Caco-2 (cell line): ENCODE measurements at regions of chr9 and their contacts with region 1.

Region 1: DNA sequence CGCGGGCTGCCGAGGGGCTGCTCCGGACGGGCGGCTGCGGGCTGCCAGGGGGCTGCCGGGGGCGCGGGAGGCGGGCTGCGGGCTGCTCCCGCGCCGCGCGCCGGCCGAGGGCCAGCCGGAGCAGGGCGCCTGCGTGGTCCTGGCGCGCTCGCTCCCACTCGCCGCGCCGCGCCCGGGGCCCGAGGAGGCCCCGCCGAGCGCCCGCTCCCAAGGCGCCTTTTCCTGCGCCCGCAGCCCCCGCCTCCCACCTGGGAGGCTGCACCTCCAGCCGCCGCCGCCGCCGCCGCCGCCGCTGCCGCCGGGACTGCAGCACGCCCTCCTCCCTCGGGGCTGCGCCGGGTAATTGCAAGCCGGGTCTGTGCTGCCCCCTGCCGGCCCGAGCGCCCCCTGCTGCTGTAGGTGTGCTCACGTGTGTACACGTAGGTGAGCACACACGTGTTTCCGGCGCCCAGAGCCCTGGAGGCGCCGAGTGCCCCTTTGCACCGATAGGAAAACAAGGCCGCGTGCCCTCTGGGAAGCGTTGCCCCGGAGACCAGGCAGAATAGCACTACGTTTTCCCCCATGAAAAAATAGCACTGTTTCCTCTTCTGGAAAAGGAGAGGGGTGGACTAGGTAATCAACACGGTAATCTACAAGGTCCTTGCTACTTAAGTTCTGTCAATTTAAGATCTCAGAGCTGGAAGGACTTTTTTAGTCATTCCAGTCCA is at the start of gene EPB41L4B:
- DNase-seq: peak; percentile 94 to 97
- H3K4me3 ChIP-seq: peak within 1 kb of the TSS; percentile 84
- H3K4me3 Mint-ChIP-seq: peak within 1 kb of the TSS; percentile 83
- H3K27ac Mint-ChIP-seq: peak within 1 kb of the TSS; percentile 58
- H3K4me1 ChIP-seq: peaks cover 20% of the 10 kb centered on the region
- H3K4me1 Mint-ChIP-seq: peaks cover 17% of the 10 kb centered on the region
- H3K27me3 ChIP-seq: no peaks in the 10 kb centered on the region
- H3K27me3 Mint-ChIP-seq: no peaks in the 10 kb centered on the region
- CTCF ChIP-seq: peak; percentile 95 to 96
- total RNA-seq, gene EPB41L4B: 14.7 and 16.3 TPM in 2 replicates

Region 2: DNA sequence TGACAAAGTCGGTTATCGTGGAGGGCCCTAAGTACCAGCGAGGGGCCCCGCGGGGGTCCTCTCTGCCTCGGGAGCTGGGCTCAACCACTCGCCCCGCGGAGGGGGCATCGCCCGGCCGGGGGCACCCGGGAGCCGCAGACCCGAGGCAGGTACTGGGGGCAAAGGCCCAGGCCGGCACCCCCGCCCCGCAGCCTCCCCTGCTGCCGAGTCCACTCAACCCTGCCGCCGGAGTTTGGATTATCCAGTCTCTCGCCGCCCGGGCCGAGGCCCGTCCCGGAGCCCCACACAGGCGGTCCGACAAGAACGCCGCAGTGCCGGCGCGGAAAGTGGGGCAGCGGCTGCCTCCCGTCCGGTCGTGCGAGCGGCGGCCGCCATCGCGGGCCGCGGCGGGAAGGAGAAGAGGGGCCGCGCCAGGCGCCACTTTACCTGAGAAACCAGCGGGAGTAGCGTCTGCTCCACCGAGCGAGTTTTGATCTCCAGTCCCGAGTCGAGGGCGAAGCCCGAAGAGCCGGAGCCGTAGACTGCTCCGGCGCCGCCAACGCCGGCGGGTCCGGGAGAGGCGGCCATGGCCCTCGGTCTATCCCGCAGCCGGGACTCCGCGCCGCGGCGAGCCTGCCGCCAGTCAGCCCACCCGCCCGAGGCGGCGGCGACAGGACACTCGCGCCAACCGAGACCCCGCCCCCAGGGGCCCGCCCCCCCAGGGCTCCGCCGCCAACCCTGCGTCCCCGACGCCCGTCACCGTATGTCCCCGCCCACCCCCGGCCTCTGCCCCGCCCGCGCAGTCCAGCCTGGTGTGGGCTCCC is 307.8 kb before region 1 on chr9 and contains the start of gene CTNNAL1:
- CTCF ChIA-PET with region 1: no interaction called
- POLR2A ChIA-PET with region 1: no interaction called
- intact Hi-C with region 1: loop called (anchors 2 kb)
- DNase-seq: peak; percentile 97
- H3K4me3 ChIP-seq: peak within 1 kb of the TSS; percentile 73
- H3K4me3 Mint-ChIP-seq: peak within 1 kb of the TSS; percentile 94
- H3K27ac Mint-ChIP-seq: peak within 1 kb of the TSS; percentile 77
- H3K4me1 ChIP-seq: peaks cover 48% of the 10 kb centered on the region
- H3K4me1 Mint-ChIP-seq: peaks cover 20% of the 10 kb centered on the region
- H3K27me3 ChIP-seq: no peaks in the 10 kb centered on the region
- H3K27me3 Mint-ChIP-seq: no peaks in the 10 kb centered on the region
- CTCF ChIP-seq: no peak
- total RNA-seq, gene CTNNAL1: 107 and 111 TPM in 2 replicates

Region 3: DNA sequence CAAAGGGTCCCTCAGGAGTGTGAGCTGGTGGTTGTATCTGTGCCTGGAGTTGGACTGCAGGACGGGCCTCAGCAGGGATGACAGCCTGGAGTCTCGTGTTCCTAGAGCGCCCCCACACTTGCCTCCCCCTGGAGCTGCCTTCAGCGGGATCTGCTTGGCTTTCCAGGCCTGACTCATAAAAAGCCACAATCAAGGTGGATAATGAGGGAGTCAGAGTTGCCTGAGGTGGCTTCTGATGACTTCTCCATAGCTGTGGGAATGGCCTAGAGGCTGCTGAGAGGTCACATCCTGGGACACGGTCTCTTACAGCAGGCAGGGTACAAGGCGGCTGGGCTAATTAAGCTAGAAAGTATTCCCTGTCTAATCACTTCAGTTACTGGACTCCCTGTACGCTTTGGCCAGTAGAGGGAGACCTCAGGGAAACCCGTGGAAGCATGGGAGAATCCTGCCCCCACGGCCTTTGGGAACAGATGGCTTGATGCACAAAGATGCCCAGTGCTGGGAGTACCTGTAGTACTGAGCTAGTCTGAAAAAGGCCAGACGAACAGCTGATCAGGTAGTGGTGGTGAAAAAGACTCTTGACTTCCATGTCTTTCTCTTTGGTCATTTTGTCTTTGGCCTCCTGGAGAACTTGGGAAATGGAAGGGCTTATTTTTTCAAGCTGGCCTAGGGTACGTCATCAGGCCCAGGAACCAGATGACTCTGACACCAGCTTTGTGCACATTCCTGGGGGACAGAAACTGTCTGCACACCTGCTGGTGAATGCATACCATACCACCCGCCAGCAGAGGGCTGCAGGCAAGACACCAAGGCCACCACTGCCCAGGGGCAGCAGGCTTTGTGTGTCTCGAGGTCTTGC is 137.7 kb before region 1 on chr9:
- CTCF ChIA-PET with region 1: no interaction called
- POLR2A ChIA-PET with region 1: no interaction called
- intact Hi-C with region 1: loop called (anchors 1 kb)
- DNase-seq: peak; percentile 71 to 76
- H3K4me3 ChIP-seq: no peak overlapping the region
- H3K4me3 Mint-ChIP-seq: no peak overlapping the region
- H3K27ac Mint-ChIP-seq: no peak overlapping the region
- H3K4me1 ChIP-seq: no peaks in the 10 kb centered on the region
- H3K4me1 Mint-ChIP-seq: no peaks in the 10 kb centered on the region
- H3K27me3 ChIP-seq: no peaks in the 10 kb centered on the region
- H3K27me3 Mint-ChIP-seq: no peaks in the 10 kb centered on the region
- CTCF ChIP-seq: peak; percentile 28 to 68

Region 4: DNA sequence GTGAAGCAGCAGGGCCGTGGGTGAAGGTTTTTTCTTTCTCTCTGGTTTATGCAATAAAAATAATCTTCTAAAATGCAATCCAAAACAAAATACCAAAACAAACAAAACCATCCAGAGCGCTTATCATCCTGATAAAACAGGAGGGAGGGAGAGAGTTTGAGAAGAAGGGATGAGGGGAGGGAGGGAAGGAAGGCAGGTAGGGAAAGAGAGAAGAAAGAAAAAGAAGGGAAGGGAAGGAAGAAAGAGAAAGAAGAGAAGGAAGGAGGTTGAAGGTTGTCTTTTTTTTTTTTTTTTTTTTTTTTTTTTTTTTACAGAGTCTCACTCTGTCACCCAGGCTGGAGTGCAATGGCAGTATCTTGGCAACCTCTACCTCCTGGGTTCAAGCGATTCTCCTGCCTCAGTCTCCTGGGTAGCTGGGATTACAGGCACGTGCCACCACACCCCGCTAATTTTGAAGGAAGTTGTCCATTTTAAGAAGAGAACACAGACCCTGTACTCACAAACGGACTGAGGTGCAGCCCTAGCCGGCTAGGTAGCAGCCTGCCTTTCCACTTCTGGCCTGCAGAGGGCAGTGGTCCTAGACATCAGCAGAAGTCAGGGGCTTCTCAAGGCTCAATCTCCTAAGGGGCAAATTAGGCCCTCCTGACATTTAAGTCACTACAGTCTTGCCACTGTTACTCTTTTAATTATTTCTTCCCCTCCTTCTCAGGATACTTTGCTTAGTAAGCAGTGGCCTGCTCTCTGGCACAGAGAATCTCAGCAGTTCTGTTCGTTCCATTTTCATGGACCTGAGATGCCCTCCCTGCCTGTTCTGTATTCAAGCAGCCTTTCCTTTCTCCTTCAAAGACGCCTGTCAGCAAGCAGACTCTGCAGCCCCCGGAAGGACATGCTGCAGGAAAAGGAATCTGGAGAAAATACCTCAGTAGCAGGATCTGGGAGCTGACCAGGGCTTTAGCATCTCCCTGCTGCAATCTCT is 76.5 kb before region 1 on chr9:
- CTCF ChIA-PET with region 1: no interaction called
- POLR2A ChIA-PET with region 1: interaction called, 4 read pairs
- intact Hi-C with region 1: loop called (anchors 1 kb)
- DNase-seq: peak; percentile 78 to 82
- H3K4me3 ChIP-seq: no peak overlapping the region
- H3K4me3 Mint-ChIP-seq: no peak overlapping the region
- H3K27ac Mint-ChIP-seq: no peak overlapping the region
- H3K4me1 ChIP-seq: no peaks in the 10 kb centered on the region
- H3K4me1 Mint-ChIP-seq: no peaks in the 10 kb centered on the region
- H3K27me3 ChIP-seq: no peaks in the 10 kb centered on the region
- H3K27me3 Mint-ChIP-seq: no peaks in the 10 kb centered on the region
- CTCF ChIP-seq: peak; percentile 95 to 96

Region 5: GRCh38 chr9:109344866-109345265 is 24.0 kb after region 1 on chr9:
- CTCF ChIA-PET with region 1: interaction called, 5 read pairs
- POLR2A ChIA-PET with region 1: no interaction called
- intact Hi-C with region 1: loop called (anchors 2 kb)
- DNase-seq: no peak
- H3K4me3 ChIP-seq: no peak overlapping the region
- H3K4me3 Mint-ChIP-seq: no peak overlapping the region
- H3K27ac Mint-ChIP-seq: peak overlapping the region; percentile 82
- H3K4me1 ChIP-seq: peaks cover 17% of the 10 kb centered on the region
- H3K4me1 Mint-ChIP-seq: peaks cover 14% of the 10 kb centered on the region
- H3K27me3 ChIP-seq: no peaks in the 10 kb centered on the region
- H3K27me3 Mint-ChIP-seq: no peaks in the 10 kb centered on the region
- CTCF ChIP-seq: no peak

Region 6: DNA sequence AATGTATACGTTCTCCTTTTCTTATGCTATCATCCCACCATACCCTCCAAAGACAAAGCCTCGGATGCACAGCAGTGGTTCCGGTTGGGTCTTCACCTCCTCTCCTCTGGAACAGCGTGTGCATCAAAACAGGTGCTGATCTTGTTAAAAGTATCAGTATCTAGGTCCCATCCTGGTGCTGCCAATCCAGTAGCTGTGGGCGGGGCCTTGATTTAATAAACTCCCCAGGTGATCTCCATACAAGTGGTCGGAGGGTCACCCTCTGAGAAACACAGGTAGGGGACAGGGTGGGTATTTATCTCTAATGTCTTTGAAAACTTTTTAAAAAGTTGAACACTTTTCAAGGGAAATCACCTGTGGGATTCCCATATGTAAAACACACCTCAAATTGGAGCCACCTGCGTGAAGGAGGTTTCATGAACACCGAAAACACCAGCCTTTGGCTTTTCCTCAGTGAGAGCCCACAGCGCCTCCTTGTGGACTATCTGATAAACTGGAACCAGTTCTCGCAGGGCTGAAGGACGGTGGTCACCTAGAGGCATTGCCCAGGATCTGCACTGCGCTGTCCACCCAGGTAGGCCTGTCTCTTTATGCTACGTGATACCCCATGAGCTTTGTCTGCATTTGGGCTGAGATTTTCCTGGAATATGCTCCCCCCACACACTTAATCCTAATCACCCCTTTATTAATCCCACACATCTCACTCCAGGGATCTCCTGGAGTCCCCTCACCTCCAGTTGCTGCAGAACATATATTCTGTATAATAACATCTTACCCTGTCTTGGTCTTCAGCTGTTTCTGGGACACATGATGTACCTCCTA is 80.5 kb after region 1 on chr9:
- CTCF ChIA-PET with region 1: no interaction called
- POLR2A ChIA-PET with region 1: no interaction called
- intact Hi-C with region 1: loop called (anchors 5 kb)
- DNase-seq: peak; percentile 78 to 81
- H3K4me3 ChIP-seq: no peak overlapping the region
- H3K4me3 Mint-ChIP-seq: no peak overlapping the region
- H3K27ac Mint-ChIP-seq: no peak overlapping the region
- H3K4me1 ChIP-seq: no peaks in the 10 kb centered on the region
- H3K4me1 Mint-ChIP-seq: no peaks in the 10 kb centered on the region
- H3K27me3 ChIP-seq: no peaks in the 10 kb centered on the region
- H3K27me3 Mint-ChIP-seq: no peaks in the 10 kb centered on the region
- CTCF ChIP-seq: peak; percentile 89 to 90